A549 (cell line): ENCODE measurements at regions of chr4 and their contacts with region 1.

Region 1: GRCh38 chr4:147866532-147867271 is 134.8 kb downstream of the ARHGAP10 start:
- DNase-seq: peak; percentile 33 to 78
- ATAC-seq: peak; percentile 92 to 98
- H3K4me3 ChIP-seq: no peak overlapping the region
- H3K27ac ChIP-seq: no peak overlapping the region
- H3K4me1 ChIP-seq: no peaks in the 10 kb centered on the region
- CTCF ChIP-seq: peak; percentile 99
- EP300 ChIP-seq: no peak
- POLR2A ChIP-seq: no peak
- RAD21 ChIP-seq: peak; percentile 98

Region 2: GRCh38 chr4:147518846-147519767 is 347.6 kb before region 1 on chr4:
- CTCF ChIA-PET with region 1: interaction called, 12 read pairs
- POLR2A ChIA-PET with region 1: no interaction called
- DNase-seq: peak; percentile 23 to 67
- ATAC-seq: peak; percentile 78 to 88; a peak in 4 of 6 replicates
- H3K4me3 ChIP-seq: no peak overlapping the region
- H3K27ac ChIP-seq: no peak overlapping the region
- H3K4me1 ChIP-seq: no peaks in the 10 kb centered on the region
- CTCF ChIP-seq: peak; percentile 73
- EP300 ChIP-seq: no peak
- POLR2A ChIP-seq: no peak
- RAD21 ChIP-seq: peak; percentile 69 to 74

Region 3: DNA sequence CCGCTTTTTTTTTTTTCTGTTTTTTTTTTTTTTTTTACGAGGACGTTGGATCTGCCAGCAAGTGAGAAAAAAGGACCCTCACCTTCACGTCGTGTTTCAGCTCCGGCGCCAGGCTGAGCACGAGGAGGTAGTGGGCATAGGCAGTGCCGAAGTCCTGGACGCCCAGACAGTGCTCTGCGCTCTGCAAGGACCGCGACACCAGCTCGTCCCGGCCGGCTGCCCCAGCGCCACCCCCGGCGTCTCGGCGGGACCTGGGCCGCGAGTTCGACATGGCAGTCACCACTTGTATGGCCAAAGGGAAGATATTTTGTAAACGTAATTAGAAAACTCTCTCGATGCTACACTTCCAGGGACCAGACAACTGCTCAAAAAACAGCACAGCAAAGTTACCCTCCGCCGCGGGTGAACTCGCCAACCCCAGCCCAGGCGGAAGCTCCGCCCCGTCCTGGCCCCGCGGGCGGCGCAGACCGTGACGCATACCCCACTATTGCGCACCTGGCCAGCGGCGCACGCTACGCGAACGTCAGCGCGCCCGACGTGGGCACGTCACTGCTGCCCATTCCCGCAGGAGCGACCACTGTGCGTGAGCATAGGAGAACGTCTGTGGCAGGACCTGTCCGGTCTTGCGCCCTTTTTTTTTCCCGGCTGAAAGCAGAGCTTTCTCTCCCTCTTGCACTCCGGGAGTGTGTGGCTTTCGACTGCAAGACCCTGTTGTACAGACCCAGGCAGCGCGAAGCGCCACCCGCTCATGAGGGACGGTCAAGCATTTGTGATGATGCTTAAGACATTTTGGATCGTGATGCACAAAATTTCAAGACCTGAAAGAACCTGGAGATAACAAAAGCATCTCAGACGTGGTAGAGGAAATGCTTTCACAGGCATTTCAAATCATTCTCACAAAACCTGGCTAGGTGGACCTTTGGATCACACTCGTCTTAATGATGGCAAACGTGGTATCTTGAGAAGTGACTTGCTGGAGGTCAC is 182.7 kb before region 1 on chr4 and contains the start of gene PRMT9:
- CTCF ChIA-PET with region 1: interaction called, 13 read pairs
- POLR2A ChIA-PET with region 1: interaction called, 7 read pairs
- DNase-seq: peak; percentile 86 to 87
- ATAC-seq: peak; percentile 99 to 100
- H3K4me3 ChIP-seq: peak within 1 kb of the TSS; percentile 67
- H3K27ac ChIP-seq: peak within 1 kb of the TSS; percentile 84 to 90
- H3K4me1 ChIP-seq: 0 out of 3 replicates have a peak, but pooled peaks cover 3% of the 10 kb centered on the region
- CTCF ChIP-seq: no peak
- EP300 ChIP-seq: no peak
- POLR2A ChIP-seq: peak; percentile 96
- RAD21 ChIP-seq: no peak
- polyA plus RNA-seq, gene PRMT9: 6.1 and 6.3 TPM in 2 replicates

Region 4: DNA sequence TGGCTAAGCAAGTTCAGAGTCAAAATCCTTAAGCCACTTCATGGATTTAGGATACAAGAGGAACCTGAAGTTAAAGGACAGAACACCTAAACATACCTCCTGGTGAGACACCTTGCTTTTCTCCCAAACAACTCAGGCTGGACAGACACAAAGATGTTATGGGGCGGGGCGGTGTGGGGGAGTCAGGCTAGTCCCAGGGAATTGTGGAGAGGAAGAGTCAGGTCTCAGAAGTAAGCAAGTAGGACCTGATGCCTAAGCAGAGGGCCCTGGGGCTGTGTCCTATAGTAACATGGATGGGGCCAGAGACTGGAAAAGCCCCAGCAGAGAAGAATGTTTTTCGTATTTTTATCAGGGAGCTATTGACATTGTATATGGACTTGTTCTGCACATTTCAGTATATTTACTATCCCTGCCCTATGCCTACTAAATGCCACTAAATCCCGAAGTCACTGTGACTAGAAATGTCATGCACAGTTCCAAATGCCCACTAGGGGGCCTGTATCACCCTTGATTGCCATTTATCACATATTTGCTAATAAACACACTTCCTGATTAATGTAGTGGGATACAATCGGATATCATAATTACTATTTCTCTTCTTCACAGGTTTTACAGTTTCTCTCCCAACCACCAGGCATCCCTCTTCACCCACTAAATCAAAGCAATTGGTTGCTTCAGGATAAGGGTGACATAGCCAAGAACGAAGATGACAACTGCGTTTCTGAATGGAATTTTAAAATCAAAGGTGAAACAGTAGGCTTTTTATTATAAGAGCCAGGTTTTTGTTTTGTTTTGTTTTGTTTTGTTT is 158.6 kb before region 1 on chr4:
- CTCF ChIA-PET with region 1: interaction called, 71 read pairs
- POLR2A ChIA-PET with region 1: no interaction called
- DNase-seq: peak in 1 of 2 experiments; percentile 57
- ATAC-seq: peak; percentile 76 to 86
- H3K4me3 ChIP-seq: no peak overlapping the region
- H3K27ac ChIP-seq: no peak overlapping the region
- H3K4me1 ChIP-seq: no peaks in the 10 kb centered on the region; the same call in 2 of the 3 replicates
- CTCF ChIP-seq: peak; percentile 81
- EP300 ChIP-seq: no peak
- POLR2A ChIP-seq: no peak
- RAD21 ChIP-seq: peak; percentile 76 to 77

Region 5: GRCh38 chr4:147772459-147772969 is 94.2 kb before region 1 on chr4:
- CTCF ChIA-PET with region 1: interaction called, 12 read pairs
- POLR2A ChIA-PET with region 1: no interaction called
- DNase-seq: peak in 1 of 2 experiments; percentile 45
- ATAC-seq: peak; percentile 63 to 76; a peak in 4 of 6 replicates
- H3K4me3 ChIP-seq: no peak overlapping the region
- H3K27ac ChIP-seq: peak overlapping the region; percentile 35 to 47; a peak in 3 of 6 replicates
- H3K4me1 ChIP-seq: peaks cover 51% of the 10 kb centered on the region
- CTCF ChIP-seq: no peak
- EP300 ChIP-seq: no peak
- POLR2A ChIP-seq: no peak
- RAD21 ChIP-seq: no peak

Region 6: DNA sequence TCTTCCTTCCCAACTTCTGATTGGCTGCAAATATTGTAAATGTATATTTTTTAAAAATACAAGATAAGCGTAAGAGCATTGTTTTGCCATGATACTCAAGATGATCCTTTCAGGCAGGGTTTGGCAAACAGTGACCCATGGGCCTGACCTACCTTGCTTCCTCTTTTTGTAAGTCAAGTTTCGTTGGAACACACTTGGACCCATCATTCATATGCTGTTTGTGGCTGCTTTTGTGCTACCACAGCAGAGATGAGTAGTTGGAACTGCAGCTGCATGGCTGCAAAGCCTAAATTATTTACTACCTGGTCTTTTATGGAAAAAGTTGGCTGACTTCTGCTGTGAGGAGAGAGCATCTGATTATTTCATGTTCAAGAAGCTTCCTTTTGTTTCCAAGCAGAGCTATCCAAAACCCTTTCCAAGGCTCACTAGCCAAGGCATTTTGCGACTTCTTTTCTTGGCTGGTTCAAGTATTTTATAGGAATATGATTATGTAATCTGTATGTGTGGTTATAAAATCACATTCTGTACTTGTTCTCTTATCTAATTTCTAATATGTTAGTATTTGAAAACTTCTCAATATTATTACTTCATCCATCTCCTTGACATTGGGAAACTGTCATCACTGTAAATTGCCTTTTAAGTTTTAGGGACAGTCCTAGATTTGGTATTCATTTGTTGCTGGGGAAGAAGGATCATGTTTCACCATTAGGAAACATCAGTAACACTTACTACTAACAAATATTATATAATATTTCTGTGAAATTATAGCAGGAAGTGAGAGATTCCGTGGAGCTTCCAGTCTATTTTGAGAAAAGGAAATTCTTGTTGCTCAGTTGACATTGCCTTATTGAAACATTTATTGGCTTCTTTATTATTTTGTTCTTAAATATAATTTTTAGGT is 25.6 kb before region 1 on chr4:
- CTCF ChIA-PET with region 1: interaction called, 23 read pairs
- POLR2A ChIA-PET with region 1: no interaction called
- DNase-seq: no peak
- ATAC-seq: no peak
- H3K4me3 ChIP-seq: no peak overlapping the region
- H3K27ac ChIP-seq: no peak overlapping the region
- H3K4me1 ChIP-seq: no peaks in the 10 kb centered on the region
- CTCF ChIP-seq: no peak
- EP300 ChIP-seq: no peak
- POLR2A ChIP-seq: no peak
- RAD21 ChIP-seq: no peak

Region 7: GRCh38 chr4:147879676-147880075 is 13.0 kb after region 1 on chr4:
- CTCF ChIA-PET with region 1: interaction called, 33 read pairs
- POLR2A ChIA-PET with region 1: no interaction called
- DNase-seq: no peak
- ATAC-seq: no peak
- H3K4me3 ChIP-seq: no peak overlapping the region
- H3K27ac ChIP-seq: no peak overlapping the region
- H3K4me1 ChIP-seq: no peaks in the 10 kb centered on the region
- CTCF ChIP-seq: no peak
- EP300 ChIP-seq: no peak
- POLR2A ChIP-seq: no peak
- RAD21 ChIP-seq: no peak

Region 8: GRCh38 chr4:148126825-148127224 is 260.1 kb after region 1 on chr4:
- CTCF ChIA-PET with region 1: no interaction called
- POLR2A ChIA-PET with region 1: no interaction called
- DNase-seq: no peak
- ATAC-seq: no peak
- H3K4me3 ChIP-seq: no peak overlapping the region
- H3K27ac ChIP-seq: no peak overlapping the region
- H3K4me1 ChIP-seq: no peaks in the 10 kb centered on the region
- CTCF ChIP-seq: no peak
- EP300 ChIP-seq: no peak
- POLR2A ChIP-seq: no peak
- RAD21 ChIP-seq: no peak